B cell (primary cell): ENCODE measurements at regions of chr14 and their contacts with region 1.

Region 1: DNA sequence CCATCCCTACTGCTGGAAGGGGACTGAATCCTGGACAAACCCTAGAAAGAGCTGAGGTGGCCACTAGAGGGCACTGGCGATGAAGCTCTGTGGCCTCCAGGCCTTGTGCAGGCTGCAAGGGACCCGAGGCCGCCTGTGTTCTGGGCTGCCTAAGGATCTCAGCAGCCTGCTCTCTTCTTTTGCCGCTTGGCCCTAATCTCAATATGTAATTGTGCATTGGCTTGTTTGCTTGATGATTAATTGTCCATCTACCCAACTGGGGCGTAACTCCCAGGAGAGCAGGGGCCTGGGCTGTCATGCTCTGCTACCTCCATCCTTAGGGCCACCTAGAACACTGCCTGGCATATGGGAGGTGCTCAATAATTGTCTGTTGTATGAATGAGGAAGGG is 73.8 kb downstream of the SYNE3 start:
- DNase-seq: peak; percentile 83
- ATAC-seq: peak; percentile 91
- H3K4me3 ChIP-seq: no peak overlapping the region
- H3K4me3 Mint-ChIP-seq: peak overlapping the region; percentile 0
- H3K27ac ChIP-seq: peak overlapping the region in 1 of 2 donors; percentile 55
- H3K27ac Mint-ChIP-seq: peak overlapping the region; percentile 73
- H3K4me1 ChIP-seq: peaks cover 28 to 37% of the 10 kb centered on the region in 2 donors
- H3K4me1 Mint-ChIP-seq: peaks cover 27% of the 10 kb centered on the region
- H3K27me3 ChIP-seq: no peaks in the 10 kb centered on the region
- H3K27me3 Mint-ChIP-seq: no peaks in the 10 kb centered on the region
- CTCF ChIP-seq: peak; percentile 88

Region 2: GRCh38 chr14:95431199-95432143 is 11.2 kb before region 1 on chr14:
- CTCF ChIA-PET with region 1: interaction called, 16 read pairs
- POLR2A ChIA-PET with region 1: no interaction called
- intact Hi-C with region 1: no loop called
- DNase-seq: peak; percentile 48
- ATAC-seq: no peak
- H3K4me3 ChIP-seq: no peak overlapping the region
- H3K4me3 Mint-ChIP-seq: no peak overlapping the region
- H3K27ac ChIP-seq: no peak overlapping the region
- H3K27ac Mint-ChIP-seq: no peak overlapping the region
- H3K4me1 ChIP-seq: peaks cover 0 to 3% of the 10 kb centered on the region in 2 donors
- H3K4me1 Mint-ChIP-seq: peaks cover 7% of the 10 kb centered on the region
- H3K27me3 ChIP-seq: no peaks in the 10 kb centered on the region
- H3K27me3 Mint-ChIP-seq: no peaks in the 10 kb centered on the region
- CTCF ChIP-seq: peak; percentile 53

Region 3: DNA sequence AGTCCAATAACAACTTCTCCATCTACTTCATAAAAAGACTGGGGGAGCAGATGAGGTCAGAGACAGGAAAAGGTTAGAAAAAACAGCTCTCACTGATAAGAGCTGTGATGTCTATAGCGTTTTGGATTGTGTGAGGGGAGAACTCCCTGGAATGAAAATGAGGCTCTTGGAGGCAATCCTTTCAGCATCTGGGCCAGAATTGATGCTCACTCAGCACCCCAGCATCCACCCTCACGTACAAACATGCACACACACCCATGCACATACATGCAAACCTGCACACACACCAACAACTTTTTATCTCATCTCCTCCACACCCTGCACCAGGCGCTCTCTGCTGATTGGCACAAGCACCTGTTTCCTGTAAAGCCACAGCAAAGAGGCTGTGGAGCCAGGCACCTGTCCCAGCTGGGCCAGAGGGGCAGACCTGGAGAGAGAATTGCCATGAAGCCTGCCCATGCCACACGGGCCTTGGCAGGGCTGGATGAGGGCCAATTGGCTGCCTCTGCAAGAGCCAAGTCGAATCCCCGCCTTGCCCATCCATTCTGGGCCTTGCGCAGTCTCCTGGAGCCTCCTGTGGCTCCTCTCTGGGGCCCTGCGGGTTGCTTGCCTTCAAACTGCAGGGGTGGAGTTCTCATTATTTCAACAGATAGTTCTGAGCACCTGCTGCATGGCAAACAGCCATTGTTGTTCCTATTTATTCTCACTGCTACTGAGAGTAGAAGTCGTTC is 20.7 kb after region 1 on chr14:
- CTCF ChIA-PET with region 1: interaction called, 12 read pairs
- POLR2A ChIA-PET with region 1: no interaction called
- intact Hi-C with region 1: loop called (anchors 1 kb)
- DNase-seq: peak; percentile 68
- ATAC-seq: peak; percentile 58
- H3K4me3 ChIP-seq: peak overlapping the region in 1 of 5 experiments; percentile 19
- H3K4me3 Mint-ChIP-seq: peak overlapping the region; percentile 69
- H3K27ac ChIP-seq: peak overlapping the region; percentile 48 to 95
- H3K27ac Mint-ChIP-seq: peak overlapping the region; percentile 87
- H3K4me1 ChIP-seq: peaks cover 53 to 54% of the 10 kb centered on the region in 2 donors
- H3K4me1 Mint-ChIP-seq: peaks cover 44% of the 10 kb centered on the region
- H3K27me3 ChIP-seq: no peaks in the 10 kb centered on the region
- H3K27me3 Mint-ChIP-seq: no peaks in the 10 kb centered on the region
- CTCF ChIP-seq: no peak

Region 4: GRCh38 chr14:95472819-95473251 is 30.2 kb after region 1 on chr14:
- CTCF ChIA-PET with region 1: interaction called, 10 read pairs
- POLR2A ChIA-PET with region 1: interaction called, 3 read pairs
- intact Hi-C with region 1: no loop called
- DNase-seq: no peak
- ATAC-seq: peak; percentile 31
- H3K4me3 ChIP-seq: no peak overlapping the region
- H3K4me3 Mint-ChIP-seq: peak overlapping the region; percentile 10
- H3K27ac ChIP-seq: peak overlapping the region in 1 of 2 donors; percentile 39
- H3K27ac Mint-ChIP-seq: peak overlapping the region; percentile 77
- H3K4me1 ChIP-seq: peaks cover 16 to 24% of the 10 kb centered on the region in 2 donors
- H3K4me1 Mint-ChIP-seq: peaks cover 28% of the 10 kb centered on the region
- H3K27me3 ChIP-seq: no peaks in the 10 kb centered on the region
- H3K27me3 Mint-ChIP-seq: no peaks in the 10 kb centered on the region
- CTCF ChIP-seq: no peak

Region 5: GRCh38 chr14:95545179-95546168 is 102.8 kb after region 1 on chr14:
- CTCF ChIA-PET with region 1: interaction called, 11 read pairs
- POLR2A ChIA-PET with region 1: no interaction called
- intact Hi-C with region 1: no loop called
- DNase-seq: no peak
- ATAC-seq: no peak
- H3K4me3 ChIP-seq: no peak overlapping the region
- H3K4me3 Mint-ChIP-seq: no peak overlapping the region
- H3K27ac ChIP-seq: no peak overlapping the region
- H3K27ac Mint-ChIP-seq: no peak overlapping the region
- H3K4me1 ChIP-seq: no peaks in the 10 kb centered on the region
- H3K4me1 Mint-ChIP-seq: peaks cover 2% of the 10 kb centered on the region
- H3K27me3 ChIP-seq: no peaks in the 10 kb centered on the region
- H3K27me3 Mint-ChIP-seq: no peaks in the 10 kb centered on the region
- CTCF ChIP-seq: no peak

Region 6: DNA sequence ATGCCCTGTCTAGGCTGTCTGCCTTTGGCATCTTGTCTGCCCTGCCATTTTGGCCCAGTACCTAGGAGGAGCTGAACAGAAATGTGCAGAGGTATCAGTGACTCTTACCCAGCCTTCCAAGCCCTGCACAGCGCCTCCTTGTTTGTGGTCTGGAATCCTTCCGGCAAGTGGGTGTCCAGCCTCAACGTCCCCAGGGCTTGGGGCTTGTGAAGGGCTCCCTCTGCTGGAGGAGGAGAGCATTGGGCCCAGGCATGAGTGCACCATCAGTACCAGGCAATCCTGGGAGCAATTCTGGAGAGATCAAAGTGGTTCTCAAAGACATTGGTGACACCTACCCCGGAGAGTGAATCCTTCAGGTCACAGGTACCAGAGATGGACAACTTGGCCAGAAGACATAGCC is 241.2 kb after region 1 on chr14:
- CTCF ChIA-PET with region 1: no interaction called
- POLR2A ChIA-PET with region 1: no interaction called
- intact Hi-C with region 1: loop called (anchors 5 kb)
- DNase-seq: peak; percentile 53
- ATAC-seq: peak; percentile 56
- H3K4me3 ChIP-seq: no peak overlapping the region
- H3K4me3 Mint-ChIP-seq: no peak overlapping the region
- H3K27ac ChIP-seq: no peak overlapping the region
- H3K27ac Mint-ChIP-seq: no peak overlapping the region
- H3K4me1 ChIP-seq: peaks cover 61 to 68% of the 10 kb centered on the region in 2 donors
- H3K4me1 Mint-ChIP-seq: peaks cover 62% of the 10 kb centered on the region
- H3K27me3 ChIP-seq: no peaks in the 10 kb centered on the region
- H3K27me3 Mint-ChIP-seq: peaks cover 24% of the 10 kb centered on the region
- CTCF ChIP-seq: peak; percentile 57

Region 7: GRCh38 chr14:96811985-96812667 is 1369.5 kb after region 1 on chr14:
- CTCF ChIA-PET with region 1: no interaction called
- POLR2A ChIA-PET with region 1: no interaction called
- intact Hi-C with region 1: no loop called
- DNase-seq: peak; percentile 20
- ATAC-seq: no peak
- H3K4me3 ChIP-seq: no peak overlapping the region
- H3K4me3 Mint-ChIP-seq: peak overlapping the region; percentile 13
- H3K27ac ChIP-seq: no peak overlapping the region
- H3K27ac Mint-ChIP-seq: no peak overlapping the region
- H3K4me1 ChIP-seq: peaks cover 6 to 10% of the 10 kb centered on the region in 2 donors
- H3K4me1 Mint-ChIP-seq: peaks cover 34% of the 10 kb centered on the region
- H3K27me3 ChIP-seq: no peaks in the 10 kb centered on the region
- H3K27me3 Mint-ChIP-seq: no peaks in the 10 kb centered on the region
- CTCF ChIP-seq: no peak